Transverse colon (tissue), 4 donors: ENCODE measurements at regions of chr11 and their contacts with region 1.

Region 1: DNA sequence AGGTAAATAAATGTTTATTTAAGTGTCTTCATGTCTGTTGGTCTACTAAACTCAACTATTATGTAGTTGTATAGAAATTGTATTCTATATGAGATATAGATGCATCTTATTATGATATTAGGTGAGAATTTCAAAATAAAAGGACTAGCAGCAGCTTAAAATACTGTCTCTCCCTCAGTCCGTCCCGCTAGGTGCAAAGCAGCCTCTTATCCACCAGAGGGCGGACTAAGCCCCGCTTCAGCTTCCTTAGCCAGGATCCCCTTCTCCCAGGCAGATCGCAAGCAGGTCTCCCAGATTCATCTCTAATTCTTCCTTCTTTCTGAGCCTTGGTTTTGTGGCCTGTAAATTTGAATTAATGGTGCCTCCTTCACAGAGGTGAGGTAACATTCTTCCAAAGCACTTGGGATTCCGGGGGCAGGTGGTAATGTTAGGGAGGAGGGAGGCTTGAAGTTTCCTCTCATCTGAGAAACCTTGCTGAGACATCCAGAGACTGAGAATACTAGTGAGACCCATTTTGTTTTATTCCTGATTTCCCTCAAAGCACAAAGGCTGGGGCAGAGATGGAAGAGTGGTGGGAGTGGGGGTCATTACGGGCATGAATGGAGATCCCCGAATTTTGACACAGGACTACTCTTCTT is 13.5 kb upstream of the INSC start:
- DNase-seq: peak; percentile 73
- H3K4me3 ChIP-seq: no peak overlapping the region
- H3K27ac ChIP-seq: no peak overlapping the region
- H3K4me1 ChIP-seq: no peaks in the 10 kb centered on the region
- H3K27me3 ChIP-seq: peaks cover 2% of the 10 kb centered on the region
- CTCF ChIP-seq: peak; percentile 87 to 92 (median 91)
- EP300 ChIP-seq: no peak
- POLR2A ChIP-seq: no peak

Region 2: GRCh38 chr11:14698771-14699170 is 402.4 kb before region 1 on chr11:
- in situ Hi-C with region 1: no loop called
- intact Hi-C with region 1: no loop called
- DNase-seq: no peak
- H3K4me3 ChIP-seq: no peak overlapping the region
- H3K27ac ChIP-seq: no peak overlapping the region
- H3K4me1 ChIP-seq: peaks cover 0 to 43% (median 9%) of the 10 kb centered on the region in 4 donors
- H3K27me3 ChIP-seq: no peaks in the 10 kb centered on the region
- CTCF ChIP-seq: no peak
- EP300 ChIP-seq: no peak
- POLR2A ChIP-seq: no peak

Region 3: GRCh38 chr11:15180212-15180792 is 79.1 kb after region 1 on chr11:
- in situ Hi-C with region 1: no loop called
- intact Hi-C with region 1: no loop called
- DNase-seq: no peak
- H3K4me3 ChIP-seq: no peak overlapping the region
- H3K27ac ChIP-seq: no peak overlapping the region
- H3K4me1 ChIP-seq: no peaks in the 10 kb centered on the region
- H3K27me3 ChIP-seq: no peaks in the 10 kb centered on the region
- CTCF ChIP-seq: no peak
- EP300 ChIP-seq: no peak
- POLR2A ChIP-seq: no peak

Region 4: GRCh38 chr11:15199693-15200092 is 98.5 kb after region 1 on chr11:
- in situ Hi-C with region 1: loop called in 1 of 4 experiments (anchors 5 kb)
- intact Hi-C with region 1: no loop called
- DNase-seq: no peak
- H3K4me3 ChIP-seq: no peak overlapping the region
- H3K27ac ChIP-seq: no peak overlapping the region
- H3K4me1 ChIP-seq: peaks cover 13 to 30% (median 14%) of the 10 kb centered on the region in 4 donors
- H3K27me3 ChIP-seq: no peaks in the 10 kb centered on the region
- CTCF ChIP-seq: no peak
- EP300 ChIP-seq: no peak
- POLR2A ChIP-seq: no peak

Region 5: GRCh38 chr11:15208378-15209222 is 107.4 kb after region 1 on chr11:
- in situ Hi-C with region 1: loop called in 2 of 4 experiments (anchors 5 kb)
- intact Hi-C with region 1: loop called (anchors 2 kb)
- DNase-seq: peak; percentile 79
- H3K4me3 ChIP-seq: no peak overlapping the region
- H3K27ac ChIP-seq: no peak overlapping the region
- H3K4me1 ChIP-seq: peaks cover 0 to 7% (median 3%) of the 10 kb centered on the region in 4 donors
- H3K27me3 ChIP-seq: no peaks in the 10 kb centered on the region
- CTCF ChIP-seq: peak; percentile 89 to 93 (median 91)
- EP300 ChIP-seq: no peak
- POLR2A ChIP-seq: no peak